PC-3 (cell line): ENCODE measurements at regions of chr12 and their contacts with region 1.

Region 1: GRCh38 chr12:8609061-8609570 is 3.5 kb downstream of the AICDA start:
- DNase-seq: peak; percentile 44
- ATAC-seq: peak; percentile 22; the same call in 1 of the 2 replicates
- H3K4me3 ChIP-seq: peak overlapping the region; percentile 21; the same call in 1 of the 2 replicates
- H3K27ac ChIP-seq: no peak overlapping the region
- H3K4me1 ChIP-seq: no peaks in the 10 kb centered on the region
- H3K27me3 ChIP-seq: peaks cover 25% of the 10 kb centered on the region; the same call in 1 of the 2 replicates
- CTCF ChIP-seq: peak; percentile 69

Region 2: DNA sequence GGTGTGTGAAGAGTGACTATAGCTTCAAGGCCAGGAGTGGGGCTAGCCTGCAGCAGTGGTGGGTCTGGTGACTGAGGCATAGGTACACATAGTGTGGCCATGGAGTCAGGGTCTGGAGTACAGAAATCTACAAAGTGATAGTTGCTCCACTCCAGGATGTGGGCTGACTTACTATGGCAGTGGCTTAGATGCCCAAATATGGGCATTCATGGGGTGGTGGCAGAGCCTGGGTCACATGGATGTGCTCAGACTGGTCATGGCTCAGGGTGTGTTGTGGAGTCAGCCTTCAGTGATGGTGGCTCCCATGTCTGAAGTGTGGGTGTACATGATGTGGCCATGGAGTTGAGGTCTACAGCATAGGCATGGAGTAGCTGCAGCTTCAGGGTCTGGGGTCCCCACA is 126.0 kb before region 1 on chr12:
- CTCF ChIA-PET with region 1: no interaction called
- POLR2A ChIA-PET with region 1: no interaction called
- intact Hi-C with region 1: no loop called
- DNase-seq: no peak
- ATAC-seq: no peak
- H3K4me3 ChIP-seq: no peak overlapping the region
- H3K27ac ChIP-seq: no peak overlapping the region
- H3K4me1 ChIP-seq: no peaks in the 10 kb centered on the region
- H3K27me3 ChIP-seq: no peaks in the 10 kb centered on the region
- CTCF ChIP-seq: no peak

Region 3: GRCh38 chr12:8544295-8544694 is 64.8 kb before region 1 on chr12:
- CTCF ChIA-PET with region 1: interaction called, 7 read pairs
- POLR2A ChIA-PET with region 1: no interaction called
- intact Hi-C with region 1: loop called (anchors 1 kb)
- DNase-seq: peak; percentile 73
- ATAC-seq: peak; percentile 51
- H3K4me3 ChIP-seq: no peak overlapping the region
- H3K27ac ChIP-seq: no peak overlapping the region
- H3K4me1 ChIP-seq: no peaks in the 10 kb centered on the region
- H3K27me3 ChIP-seq: peaks cover 20% of the 10 kb centered on the region; the same call in 1 of the 2 replicates
- CTCF ChIP-seq: peak; percentile 79

Region 4: DNA sequence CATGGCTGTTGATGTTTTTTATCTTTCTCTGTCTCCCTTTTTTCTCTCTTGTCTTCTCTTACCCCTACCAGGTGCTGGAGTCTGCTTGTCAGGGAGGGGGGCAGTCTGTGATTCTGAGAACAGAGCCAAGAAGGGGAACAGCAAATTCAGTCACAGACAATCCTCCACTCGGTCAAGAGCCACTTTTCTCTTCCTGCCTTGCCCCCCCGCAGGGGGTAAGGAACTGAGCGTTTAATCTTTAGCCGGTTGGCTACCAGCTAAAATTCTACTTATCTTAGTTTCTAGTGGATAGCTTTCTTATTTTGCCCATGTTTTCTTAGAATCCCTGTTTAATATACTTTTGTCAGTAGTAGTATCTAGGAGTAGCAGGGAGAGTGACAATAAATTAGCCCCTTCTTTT is 90.6 kb after region 1 on chr12:
- CTCF ChIA-PET with region 1: interaction called, 12 read pairs
- POLR2A ChIA-PET with region 1: no interaction called
- intact Hi-C with region 1: no loop called
- DNase-seq: no peak
- ATAC-seq: no peak
- H3K4me3 ChIP-seq: no peak overlapping the region
- H3K27ac ChIP-seq: no peak overlapping the region
- H3K4me1 ChIP-seq: no peaks in the 10 kb centered on the region; the same call in 1 of the 2 replicates
- H3K27me3 ChIP-seq: peaks cover 39% of the 10 kb centered on the region
- CTCF ChIP-seq: no peak